Panc1 (cell line): ENCODE measurements at regions of chr7 and their contacts with region 1.

Region 1: GRCh38 chr7:77657427-77658224 is 38.6 kb upstream of the RSBN1L start:
- DNase-seq: no peak
- ATAC-seq: peak; percentile 56; the same call in 1 of the 2 replicates
- H3K4me3 ChIP-seq: no peak overlapping the region
- H3K27ac ChIP-seq: no peak overlapping the region
- H3K4me1 ChIP-seq: no peaks in the 10 kb centered on the region
- H3K27me3 ChIP-seq: no peaks in the 10 kb centered on the region
- CTCF ChIP-seq: no peak

Region 2: DNA sequence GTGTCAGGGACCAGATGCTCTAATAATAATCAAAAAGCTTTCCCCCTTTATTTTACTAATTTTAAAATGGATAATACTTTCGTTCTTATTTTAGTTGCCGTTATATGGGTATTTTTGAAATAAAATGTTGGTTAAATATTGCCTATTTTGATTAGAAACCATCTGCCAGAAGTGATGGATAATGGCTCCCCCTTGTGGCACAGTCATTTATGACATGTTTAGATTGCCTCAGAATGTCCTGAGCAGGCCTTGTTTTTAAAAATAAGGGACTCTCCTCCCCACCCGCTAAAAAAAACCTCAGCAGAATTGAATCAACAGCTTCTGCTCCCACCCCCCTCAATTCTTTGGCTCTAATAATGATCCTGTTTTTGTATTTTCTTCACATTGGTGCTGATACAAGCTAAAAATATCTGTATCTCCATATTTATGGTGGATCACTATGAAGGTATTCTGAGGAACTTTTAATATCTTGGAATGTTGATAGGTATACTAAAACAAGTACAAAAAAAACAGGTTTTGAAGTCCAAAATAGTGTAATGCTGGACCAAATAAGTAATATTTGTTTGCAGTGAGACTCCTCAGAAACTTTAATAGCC is 101.8 kb after region 1 on chr7:
- CTCF ChIA-PET with region 1: no interaction called
- POLR2A ChIA-PET with region 1: no interaction called
- in situ Hi-C with region 1: no loop called
- intact Hi-C with region 1: loop called (anchors 1 kb)
- DNase-seq: peak; percentile 60
- ATAC-seq: peak; percentile 81
- H3K4me3 ChIP-seq: no peak overlapping the region
- H3K27ac ChIP-seq: no peak overlapping the region
- H3K4me1 ChIP-seq: no peaks in the 10 kb centered on the region
- H3K27me3 ChIP-seq: no peaks in the 10 kb centered on the region
- CTCF ChIP-seq: peak; percentile 82